Esophagus muscularis mucosa (tissue), 4 donors: ENCODE measurements at regions of chr22 and their contacts with region 1.

Region 1: DNA sequence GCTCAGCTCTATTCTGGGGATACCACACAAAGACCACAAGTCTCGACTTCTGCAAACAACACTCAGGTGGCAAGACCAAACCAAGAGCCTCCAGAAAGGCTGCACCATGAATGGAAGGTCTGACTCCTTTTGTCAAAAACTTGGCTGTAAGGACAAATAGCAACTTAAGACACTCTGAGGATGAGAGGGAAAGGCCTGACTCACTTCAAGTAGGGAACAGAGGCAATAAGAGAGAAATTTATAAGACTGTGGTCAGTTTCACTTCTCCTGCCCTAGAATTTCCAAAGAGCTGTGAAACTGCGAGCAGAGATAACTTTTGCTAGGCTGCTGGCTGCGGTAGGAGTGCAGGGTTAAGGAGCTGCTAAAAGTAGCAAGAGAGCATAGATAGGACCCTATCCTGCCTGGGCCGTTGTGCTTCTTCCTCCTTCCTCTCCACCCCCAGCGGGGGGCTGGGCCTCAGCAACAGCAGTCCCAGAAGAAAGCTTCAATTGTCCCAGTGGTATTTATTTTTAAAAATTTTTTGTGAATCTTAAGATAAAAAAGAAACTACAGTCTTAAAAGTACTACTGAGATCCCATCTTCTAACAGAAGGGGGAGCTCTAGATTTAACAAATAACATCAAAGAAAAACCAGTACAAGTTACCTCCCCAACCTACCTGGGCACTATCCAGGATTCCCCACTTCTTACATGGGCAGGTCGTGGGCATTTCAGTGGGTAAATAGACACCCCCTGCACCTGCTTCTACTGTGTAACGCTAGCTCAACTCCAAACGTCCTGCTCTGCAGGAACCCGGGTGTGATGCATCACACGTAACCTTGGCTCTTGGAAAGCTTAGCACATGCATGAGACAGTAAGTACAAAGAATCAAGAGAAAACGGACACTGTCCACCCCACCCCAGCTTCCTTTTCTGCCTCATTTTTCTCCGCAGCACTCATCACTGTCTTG is 66.4 kb downstream of the SGSM3 start:
- DNase-seq: no peak
- H3K4me3 ChIP-seq: peak overlapping the region; percentile 26 to 43 (median 34)
- H3K27ac ChIP-seq: peak overlapping the region; percentile 57 to 80 (median 75)
- H3K4me1 ChIP-seq: peaks cover 19 to 47% (median 40%) of the 10 kb centered on the region in 4 donors
- H3K27me3 ChIP-seq: no peaks in the 10 kb centered on the region
- CTCF ChIP-seq: peak; percentile 64 to 83 (median 68)
- EP300 ChIP-seq: no peak
- POLR2A ChIP-seq: no peak

Region 2: GRCh38 chr22:40487663-40488249 is 51.0 kb after region 1 on chr22:
- intact Hi-C with region 1: loop called (anchors 5 kb)
- DNase-seq: no peak
- H3K4me3 ChIP-seq: no peak overlapping the region
- H3K27ac ChIP-seq: peak overlapping the region in 1 of 4 donors; percentile 7
- H3K4me1 ChIP-seq: peaks cover 41 to 66% (median 54%) of the 10 kb centered on the region in 4 donors
- H3K27me3 ChIP-seq: no peaks in the 10 kb centered on the region
- CTCF ChIP-seq: peak; percentile 48 to 65 (median 53)
- EP300 ChIP-seq: no peak
- POLR2A ChIP-seq: no peak

Region 3: DNA sequence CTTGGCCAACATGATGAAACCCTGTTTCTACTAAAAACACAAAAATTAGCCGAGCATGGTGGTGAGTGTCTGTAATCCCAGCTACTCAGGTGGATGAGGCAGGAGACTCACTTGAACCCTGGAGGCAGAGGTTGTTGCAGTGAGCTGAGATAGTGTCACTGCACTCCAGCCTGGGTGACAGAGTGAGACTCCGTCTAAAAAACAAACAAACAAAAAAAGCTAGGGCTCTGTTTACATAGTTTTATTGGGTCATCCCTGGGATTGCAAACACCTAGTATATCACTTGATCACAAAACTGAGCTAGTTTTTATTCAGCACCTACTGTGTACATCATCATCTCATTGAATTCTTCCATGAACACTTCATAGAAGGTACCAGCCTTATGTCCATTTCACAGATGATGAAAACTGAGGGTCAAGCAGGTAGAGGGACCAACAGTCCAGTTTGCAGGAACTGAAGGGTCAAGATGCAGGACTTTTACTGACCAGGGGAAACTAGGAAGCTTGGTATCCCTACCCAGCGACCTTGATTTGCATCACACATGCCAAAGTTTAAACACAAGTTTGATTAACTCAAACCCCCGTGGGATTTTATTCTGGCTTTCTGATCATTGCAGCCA is 208.9 kb after region 1 on chr22:
- intact Hi-C with region 1: loop called (anchors 1 kb)
- DNase-seq: no peak
- H3K4me3 ChIP-seq: no peak overlapping the region
- H3K27ac ChIP-seq: peak overlapping the region in 3 of 4 donors; percentile 51 to 69 (median 57)
- H3K4me1 ChIP-seq: peaks cover 4 to 12% (median 7%) of the 10 kb centered on the region in 4 donors
- H3K27me3 ChIP-seq: no peaks in the 10 kb centered on the region
- CTCF ChIP-seq: no peak
- EP300 ChIP-seq: no peak
- POLR2A ChIP-seq: no peak